ENCODE measurements at regions of chr15 and their contacts with region 1.

Region 1: GRCh38 chr15:44738340-44738984 is 2.1 kb downstream of the TRIM69 start:
- DNase-seq: no peak
- ATAC-seq: no peak
- H3K4me3 Mint-ChIP-seq: peak overlapping the region; percentile 36
- H3K27ac Mint-ChIP-seq: peak overlapping the region; percentile 46
- H3K4me1 Mint-ChIP-seq: peaks cover 49% of the 10 kb centered on the region
- H3K27me3 Mint-ChIP-seq: no peaks in the 10 kb centered on the region

Region 2: DNA sequence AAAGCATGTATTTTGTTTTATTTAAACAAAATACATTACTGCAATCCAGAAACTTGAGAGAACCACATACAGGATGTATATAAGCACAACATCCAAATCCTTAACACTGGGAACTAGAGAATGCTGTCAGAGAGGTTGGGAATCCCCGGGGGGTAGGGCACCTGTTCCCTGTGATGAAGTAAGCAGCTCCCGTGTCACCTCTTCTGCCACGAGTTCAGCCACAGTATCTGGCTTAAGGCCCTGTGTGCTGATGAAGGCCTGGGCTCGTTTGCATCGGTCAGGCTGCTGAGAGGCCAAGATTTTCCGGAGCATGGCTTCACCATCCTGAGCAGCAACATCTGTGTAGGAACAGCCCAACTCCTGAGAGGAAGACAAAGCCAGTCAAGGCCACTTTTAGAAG is 165.1 kb before region 1 on chr15:
- CTCF ChIA-PET with region 1: interaction called, 78 read pairs
- DNase-seq: no peak
- ATAC-seq: no peak
- H3K4me3 Mint-ChIP-seq: no peak overlapping the region
- H3K27ac Mint-ChIP-seq: no peak overlapping the region
- H3K4me1 Mint-ChIP-seq: peaks cover 10% of the 10 kb centered on the region
- H3K27me3 Mint-ChIP-seq: no peaks in the 10 kb centered on the region

Region 3: DNA sequence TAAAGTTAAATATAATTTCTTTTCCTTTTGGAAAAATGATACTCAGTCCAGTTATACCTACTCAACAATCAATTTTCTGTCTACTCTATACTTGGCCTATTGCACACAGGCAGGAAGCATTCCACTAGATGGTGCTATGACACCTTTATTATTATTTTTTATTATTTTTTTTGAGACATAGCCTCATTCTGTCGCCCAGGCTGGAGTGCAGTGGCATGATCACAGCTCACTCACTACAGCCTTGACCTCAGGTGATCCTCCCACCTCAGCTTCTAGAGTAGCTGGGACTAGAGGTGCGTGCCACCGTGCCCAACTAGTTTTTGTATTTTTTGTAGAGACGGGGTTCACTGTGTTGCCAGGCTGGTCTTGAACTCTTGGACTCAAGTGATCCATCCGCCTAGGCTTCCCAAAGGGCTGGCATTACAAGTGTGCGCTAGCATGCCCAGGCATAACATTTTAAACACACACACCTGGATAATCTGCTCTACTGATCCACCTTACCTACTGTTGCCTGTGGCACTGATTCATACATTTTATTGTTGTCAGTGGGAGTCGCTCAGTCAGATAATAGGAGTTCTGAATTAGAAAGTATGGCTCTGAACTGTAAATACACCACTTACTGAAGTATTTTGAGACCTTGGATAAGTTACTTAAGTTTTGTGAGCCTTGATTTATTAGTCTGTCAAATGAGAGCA is 145.3 kb before region 1 on chr15:
- CTCF ChIA-PET with region 1: interaction called, 76 read pairs
- DNase-seq: no peak
- ATAC-seq: peak; percentile 76
- H3K4me3 Mint-ChIP-seq: no peak overlapping the region
- H3K27ac Mint-ChIP-seq: peak overlapping the region; percentile 70
- H3K4me1 Mint-ChIP-seq: peaks cover 29% of the 10 kb centered on the region
- H3K27me3 Mint-ChIP-seq: no peaks in the 10 kb centered on the region

Region 4: GRCh38 chr15:44620081-44620480 is 118.4 kb before region 1 on chr15:
- CTCF ChIA-PET with region 1: interaction called, 10 read pairs
- DNase-seq: no peak
- ATAC-seq: no peak
- H3K4me3 Mint-ChIP-seq: no peak overlapping the region
- H3K27ac Mint-ChIP-seq: no peak overlapping the region
- H3K4me1 Mint-ChIP-seq: peaks cover 5% of the 10 kb centered on the region
- H3K27me3 Mint-ChIP-seq: no peaks in the 10 kb centered on the region

Region 5: DNA sequence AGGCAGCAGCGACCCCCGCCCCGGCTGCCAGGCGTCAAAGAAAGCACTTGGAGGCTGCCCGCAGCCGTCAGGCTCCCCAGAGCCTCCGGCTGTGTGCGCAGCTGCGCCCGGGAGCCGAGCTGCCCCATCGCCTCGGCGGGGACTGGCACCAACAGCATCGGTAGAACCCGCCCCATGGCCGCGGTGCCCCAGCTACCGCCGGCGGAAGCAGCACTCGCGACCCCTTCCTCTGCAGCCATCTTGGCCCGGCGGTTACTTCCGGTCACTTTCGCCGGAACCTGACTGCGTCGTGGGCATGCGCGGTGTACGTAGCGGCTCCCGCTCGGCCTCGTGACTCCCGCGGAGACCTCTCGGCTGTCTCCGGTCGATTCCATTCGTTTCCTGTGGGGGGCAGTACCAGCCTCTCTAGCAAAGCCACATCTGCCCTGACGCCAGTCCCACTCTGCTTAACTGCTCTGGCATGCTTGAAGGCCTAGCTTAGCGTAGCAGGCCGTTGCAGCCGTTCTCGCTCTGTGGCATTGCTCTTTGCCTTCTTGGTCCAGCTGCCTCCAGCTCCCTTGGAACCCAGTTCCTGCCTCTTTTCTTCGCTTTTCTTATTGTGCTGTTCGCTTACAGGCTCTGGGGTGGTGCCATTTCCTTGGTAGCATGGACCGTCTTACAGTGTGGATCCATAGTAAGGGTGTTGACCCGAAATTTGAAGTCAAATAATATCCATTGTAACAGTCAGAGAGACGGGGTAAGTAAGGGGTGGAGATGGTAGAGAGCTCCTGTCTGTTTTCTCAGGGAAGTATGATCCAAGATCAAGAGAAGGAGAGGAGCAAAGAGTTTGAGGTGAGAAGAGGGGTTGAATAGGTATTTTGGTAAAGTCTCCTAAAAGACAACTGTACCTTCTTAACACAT is 74.8 kb before region 1 on chr15 and contains the start of gene SPG11:
- CTCF ChIA-PET with region 1: interaction called, 156 read pairs
- DNase-seq: peak; percentile 99
- ATAC-seq: peak; percentile 82
- H3K4me3 Mint-ChIP-seq: peak within 1 kb of the TSS; percentile 99
- H3K27ac Mint-ChIP-seq: peak within 1 kb of the TSS; percentile 97
- H3K4me1 Mint-ChIP-seq: peaks cover 53% of the 10 kb centered on the region
- H3K27me3 Mint-ChIP-seq: no peaks in the 10 kb centered on the region
- total RNA-seq, gene SPG11: 76.7 to 95.8 TPM

Region 6: DNA sequence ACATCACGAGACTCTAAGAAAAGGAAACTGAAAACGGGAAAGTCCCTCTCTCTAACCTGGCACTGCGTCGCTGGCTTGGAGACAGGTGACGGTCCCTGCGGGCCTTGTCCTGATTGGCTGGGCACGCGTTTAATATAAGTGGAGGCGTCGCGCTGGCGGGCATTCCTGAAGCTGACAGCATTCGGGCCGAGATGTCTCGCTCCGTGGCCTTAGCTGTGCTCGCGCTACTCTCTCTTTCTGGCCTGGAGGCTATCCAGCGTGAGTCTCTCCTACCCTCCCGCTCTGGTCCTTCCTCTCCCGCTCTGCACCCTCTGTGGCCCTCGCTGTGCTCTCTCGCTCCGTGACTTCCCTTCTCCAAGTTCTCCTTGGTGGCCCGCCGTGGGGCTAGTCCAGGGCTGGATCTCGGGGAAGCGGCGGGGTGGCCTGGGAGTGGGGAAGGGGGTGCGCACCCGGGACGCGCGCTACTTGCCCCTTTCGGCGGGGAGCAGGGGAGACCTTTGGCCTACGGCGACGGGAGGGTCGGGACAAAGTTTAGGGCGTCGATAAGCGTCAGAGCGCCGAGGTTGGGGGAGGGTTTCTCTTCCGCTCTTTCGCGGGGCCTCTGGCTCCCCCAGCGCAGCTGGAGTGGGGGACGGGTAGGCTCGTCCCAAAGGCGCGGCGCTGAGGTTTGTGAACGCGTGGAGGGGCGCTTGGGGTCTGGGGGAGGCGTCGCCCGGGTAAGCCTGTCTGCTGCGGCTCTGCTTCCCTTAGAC is 26.9 kb before region 1 on chr15 and contains the start of gene B2M:
- CTCF ChIA-PET with region 1: interaction called, 95 read pairs
- DNase-seq: peak; percentile 96
- ATAC-seq: peak; percentile 76
- H3K4me3 Mint-ChIP-seq: peak within 1 kb of the TSS; percentile 95
- H3K27ac Mint-ChIP-seq: peak within 1 kb of the TSS; percentile 100
- H3K4me1 Mint-ChIP-seq: peaks cover 42% of the 10 kb centered on the region
- H3K27me3 Mint-ChIP-seq: no peaks in the 10 kb centered on the region
- total RNA-seq, gene B2M: 6,920 to 7,161 TPM

Region 7: GRCh38 chr15:44753345-44753744 is 14.9 kb after region 1 on chr15:
- CTCF ChIA-PET with region 1: interaction called, 16 read pairs
- DNase-seq: no peak
- ATAC-seq: no peak
- H3K4me3 Mint-ChIP-seq: no peak overlapping the region
- H3K27ac Mint-ChIP-seq: no peak overlapping the region
- H3K4me1 Mint-ChIP-seq: peaks cover 19% of the 10 kb centered on the region
- H3K27me3 Mint-ChIP-seq: no peaks in the 10 kb centered on the region